ENCODE measurements at regions of chr7 and their contacts with region 1.

Region 1: GRCh38 chr7:50467817-50468610 is 17.9 kb upstream of the FIGNL1 start:
- DNase-seq: peak; percentile 79 to 87 (median 86)
- ATAC-seq: peak; percentile 95
- H3K4me3 ChIP-seq: no peak overlapping the region
- H3K27ac ChIP-seq: no peak overlapping the region
- H3K4me1 ChIP-seq: peaks cover 3 to 6% of the 10 kb centered on the region in 2 experiments; a peak in 3 of 5 replicates
- H3K27me3 ChIP-seq: peaks cover 13 to 56% of the 10 kb centered on the region in 2 experiments
- CTCF ChIP-seq: peak; percentile 87 to 92 (median 90)
- EP300 ChIP-seq: no peak
- POLR2A ChIP-seq: no peak
- RAD21 ChIP-seq: peak; percentile 95 to 99

Region 2: GRCh38 chr7:50455658-50456057 is 12.4 kb before region 1 on chr7:
- CTCF ChIA-PET with region 1: no interaction called
- POLR2A ChIA-PET with region 1: no interaction called
- in situ Hi-C with region 1: no loop called
- intact Hi-C with region 1: no loop called
- DNase-seq: no peak
- ATAC-seq: no peak
- H3K4me3 ChIP-seq: no peak overlapping the region
- H3K27ac ChIP-seq: no peak overlapping the region
- H3K4me1 ChIP-seq: peaks cover 0 to 3% of the 10 kb centered on the region in 2 experiments; a peak in 2 of 5 replicates
- H3K27me3 ChIP-seq: peaks cover 9 to 20% of the 10 kb centered on the region in 2 experiments
- CTCF ChIP-seq: no peak
- EP300 ChIP-seq: no peak
- POLR2A ChIP-seq: no peak
- RAD21 ChIP-seq: no peak

Region 3: DNA sequence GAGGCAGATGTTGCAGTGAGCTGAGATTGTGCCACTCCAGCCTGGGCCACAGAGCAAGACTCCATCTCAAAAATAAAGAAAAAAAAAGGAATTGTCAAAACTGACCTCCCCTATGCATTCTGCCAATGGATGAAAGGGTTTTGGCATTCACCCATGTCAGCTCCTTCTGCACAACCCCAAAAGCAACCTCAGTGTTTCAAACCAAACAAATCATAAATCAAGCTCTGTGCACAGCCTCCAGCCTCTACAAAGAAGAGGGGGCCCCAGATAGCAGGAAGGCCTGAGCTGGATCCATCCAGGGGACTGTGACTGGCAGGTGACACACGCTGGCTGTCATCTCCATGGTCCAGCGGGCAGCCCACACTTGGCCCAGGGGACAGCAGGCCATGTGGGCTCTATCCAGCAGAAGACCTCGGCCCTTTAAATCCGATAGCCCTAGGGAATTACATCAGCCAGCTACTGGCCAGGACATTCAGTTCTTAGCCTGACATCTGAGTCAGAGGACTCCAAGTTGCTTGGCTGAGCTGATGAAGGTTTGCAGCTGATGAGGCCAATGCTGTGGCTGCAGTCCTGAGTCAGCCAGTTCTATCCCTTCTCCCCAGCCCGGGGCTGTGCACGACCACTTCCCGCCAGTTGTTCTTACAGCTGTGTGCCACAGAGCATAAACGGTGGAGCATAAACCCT is 34.1 kb after region 1 on chr7:
- CTCF ChIA-PET with region 1: no interaction called
- POLR2A ChIA-PET with region 1: no interaction called
- in situ Hi-C with region 1: no loop called
- intact Hi-C with region 1: no loop called
- DNase-seq: peak in 1 of 4 experiments; percentile 32
- ATAC-seq: peak; percentile 71
- H3K4me3 ChIP-seq: no peak overlapping the region
- H3K27ac ChIP-seq: no peak overlapping the region
- H3K4me1 ChIP-seq: peaks cover 0 to 9% of the 10 kb centered on the region in 2 experiments; a peak in 3 of 5 replicates
- H3K27me3 ChIP-seq: peaks cover 0 to 19% of the 10 kb centered on the region in 2 experiments; a peak in 1 of 5 replicates
- CTCF ChIP-seq: no peak
- EP300 ChIP-seq: no peak
- POLR2A ChIP-seq: no peak
- RAD21 ChIP-seq: no peak

Region 4: GRCh38 chr7:50560865-50561351 is 92.9 kb after region 1 on chr7:
- CTCF ChIA-PET with region 1: no interaction called
- POLR2A ChIA-PET with region 1: no interaction called
- in situ Hi-C with region 1: loop called (anchors 5 kb)
- intact Hi-C with region 1: loop called (anchors 5 kb)
- DNase-seq: no peak
- ATAC-seq: peak; percentile 8
- H3K4me3 ChIP-seq: no peak overlapping the region
- H3K27ac ChIP-seq: no peak overlapping the region
- H3K4me1 ChIP-seq: peaks cover 7 to 10% of the 10 kb centered on the region in 2 experiments; a peak in 4 of 5 replicates
- H3K27me3 ChIP-seq: peaks cover 21 to 65% of the 10 kb centered on the region in 2 experiments
- CTCF ChIP-seq: no peak
- EP300 ChIP-seq: no peak
- POLR2A ChIP-seq: no peak
- RAD21 ChIP-seq: no peak

Region 5: DNA sequence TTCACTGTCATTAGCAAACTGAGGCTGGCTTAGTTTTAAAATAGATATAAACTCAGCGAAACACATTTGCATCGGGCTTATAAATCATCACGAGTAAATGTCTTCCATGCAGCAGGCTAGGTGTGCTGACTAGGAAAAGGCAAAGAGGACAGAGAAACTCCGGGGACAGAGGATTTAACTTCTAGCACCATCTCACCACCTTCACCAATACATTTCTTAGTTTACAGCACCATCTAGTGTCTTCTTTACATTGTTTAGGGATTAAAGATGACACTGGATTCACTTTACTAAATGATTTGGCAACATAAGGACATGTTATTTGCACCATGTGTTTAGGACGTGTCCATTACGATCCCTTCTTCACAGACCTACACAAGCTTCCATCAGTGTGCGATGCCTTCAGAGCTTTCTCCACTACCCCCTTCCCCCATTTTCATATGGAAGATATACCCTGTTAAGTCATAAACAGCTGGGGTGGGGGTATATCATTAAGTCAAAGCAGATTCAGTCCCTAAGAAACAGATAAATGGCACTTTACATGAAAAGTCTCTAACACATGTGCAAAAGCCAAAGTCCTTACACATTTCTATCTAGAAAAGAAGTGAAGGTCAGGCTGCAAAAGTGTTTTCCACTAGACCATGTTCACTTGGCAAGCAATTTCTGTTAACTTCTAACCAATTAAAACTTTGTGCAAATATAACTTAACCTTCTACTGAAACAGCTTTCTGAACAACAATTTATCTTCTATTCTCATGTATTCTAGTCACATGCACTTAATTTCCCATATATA is 211.4 kb after region 1 on chr7:
- CTCF ChIA-PET with region 1: interaction called, 5 read pairs
- POLR2A ChIA-PET with region 1: no interaction called
- in situ Hi-C with region 1: no loop called
- intact Hi-C with region 1: loop called (anchors 5 kb)
- DNase-seq: peak in 2 of 4 experiments; percentile 21 to 25
- ATAC-seq: peak; percentile 68; the same call in 2 of the 3 replicates
- H3K4me3 ChIP-seq: no peak overlapping the region
- H3K27ac ChIP-seq: no peak overlapping the region
- H3K4me1 ChIP-seq: no peaks in the 10 kb centered on the region
- H3K27me3 ChIP-seq: no peaks in the 10 kb centered on the region
- CTCF ChIP-seq: peak in 2 of 3 experiments; percentile 30 to 40; a peak in 1 of 6 replicates
- EP300 ChIP-seq: no peak
- POLR2A ChIP-seq: no peak
- RAD21 ChIP-seq: peak; percentile 16 to 34; a peak in 1 of 4 replicates

Region 6: GRCh38 chr7:50826371-50827172 is 358.6 kb after region 1 on chr7:
- CTCF ChIA-PET with region 1: no interaction called
- POLR2A ChIA-PET with region 1: no interaction called
- in situ Hi-C with region 1: no loop called
- intact Hi-C with region 1: no loop called
- DNase-seq: peak in 1 of 4 experiments; percentile 12
- ATAC-seq: peak; percentile 72
- H3K4me3 ChIP-seq: no peak overlapping the region
- H3K27ac ChIP-seq: no peak overlapping the region
- H3K4me1 ChIP-seq: no peaks in the 10 kb centered on the region; a peak in 2 of 5 replicates
- H3K27me3 ChIP-seq: peaks cover 7 to 29% of the 10 kb centered on the region in 2 experiments
- CTCF ChIP-seq: no peak
- EP300 ChIP-seq: no peak
- POLR2A ChIP-seq: no peak
- RAD21 ChIP-seq: 0 out of 4 replicates have a peak, but pooled peaks of 1 of the 2 experiments have one; percentile 7

Region 7: DNA sequence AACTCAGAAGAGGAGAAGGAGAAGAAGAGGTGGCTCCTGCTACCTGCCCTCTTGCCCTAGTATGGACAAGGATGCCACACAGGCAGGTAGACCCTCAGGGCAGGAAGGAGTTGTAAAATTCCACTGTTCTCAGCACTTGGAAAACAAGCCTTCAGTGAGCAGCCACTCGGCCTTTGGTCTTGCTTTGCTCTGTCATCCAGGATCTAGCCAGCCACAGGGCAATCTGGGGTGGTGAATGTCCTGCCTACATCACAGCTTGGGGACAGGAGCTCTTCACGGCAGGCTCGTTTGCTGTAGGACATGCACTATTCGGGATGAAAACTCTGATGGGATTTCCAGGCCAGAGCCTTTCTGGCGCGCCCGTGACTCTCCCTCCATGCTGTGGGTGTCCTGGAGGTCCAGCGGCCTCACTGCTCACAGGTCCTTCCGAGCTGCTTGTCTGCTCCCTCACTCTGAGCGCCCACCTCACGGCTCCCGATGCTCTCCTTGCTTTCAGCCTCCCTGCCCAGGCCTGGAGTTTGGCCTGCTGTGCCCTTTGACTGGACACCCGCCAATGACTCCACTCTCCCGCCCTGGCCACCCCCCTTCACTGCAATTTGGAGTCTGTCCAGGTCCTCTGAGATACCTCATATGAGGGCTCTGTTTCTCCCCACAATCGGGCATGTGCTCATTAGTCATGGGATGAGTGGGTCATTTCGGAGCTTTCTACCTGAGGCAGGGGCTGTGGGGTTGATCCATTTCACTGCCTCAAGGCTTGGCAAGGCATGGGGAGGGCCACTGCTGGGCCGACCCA is 541.9 kb after region 1 on chr7:
- CTCF ChIA-PET with region 1: no interaction called
- POLR2A ChIA-PET with region 1: no interaction called
- in situ Hi-C with region 1: no loop called
- intact Hi-C with region 1: loop called (anchors 10 kb)
- DNase-seq: no peak
- ATAC-seq: no peak
- H3K4me3 ChIP-seq: no peak overlapping the region
- H3K27ac ChIP-seq: no peak overlapping the region
- H3K4me1 ChIP-seq: peaks cover 0 to 3% of the 10 kb centered on the region in 2 experiments; a peak in 1 of 5 replicates
- H3K27me3 ChIP-seq: peaks cover 10 to 73% of the 10 kb centered on the region in 2 experiments; a peak in 4 of 5 replicates
- CTCF ChIP-seq: no peak
- EP300 ChIP-seq: no peak
- POLR2A ChIP-seq: no peak
- RAD21 ChIP-seq: no peak

Region 8: GRCh38 chr7:51141451-51142003 is 673.5 kb after region 1 on chr7:
- CTCF ChIA-PET with region 1: no interaction called
- POLR2A ChIA-PET with region 1: no interaction called
- in situ Hi-C with region 1: no loop called
- intact Hi-C with region 1: loop called (anchors 2 kb)
- DNase-seq: peak in 2 of 4 experiments; percentile 5 to 12
- ATAC-seq: no peak
- H3K4me3 ChIP-seq: no peak overlapping the region
- H3K27ac ChIP-seq: no peak overlapping the region
- H3K4me1 ChIP-seq: no peaks in the 10 kb centered on the region
- H3K27me3 ChIP-seq: peaks cover 0 to 4% of the 10 kb centered on the region in 2 experiments; a peak in 2 of 5 replicates
- CTCF ChIP-seq: peak; percentile 36 to 64 (median 48); a peak in 5 of 6 replicates
- EP300 ChIP-seq: no peak
- POLR2A ChIP-seq: no peak
- RAD21 ChIP-seq: peak in 1 of 2 experiments; percentile 53; a peak in 3 of 4 replicates

Measured in K562 (cell line).